Left cardiac atrium (tissue), 4 donors: ENCODE measurements at regions of chr21 and their contacts with region 1.

Region 1: GRCh38 chr21:41612674-41613532 is 104.9 kb upstream of the TMPRSS2 start:
- DNase-seq: peak; percentile 83
- ATAC-seq: peak; percentile 82 to 93

Region 2: DNA sequence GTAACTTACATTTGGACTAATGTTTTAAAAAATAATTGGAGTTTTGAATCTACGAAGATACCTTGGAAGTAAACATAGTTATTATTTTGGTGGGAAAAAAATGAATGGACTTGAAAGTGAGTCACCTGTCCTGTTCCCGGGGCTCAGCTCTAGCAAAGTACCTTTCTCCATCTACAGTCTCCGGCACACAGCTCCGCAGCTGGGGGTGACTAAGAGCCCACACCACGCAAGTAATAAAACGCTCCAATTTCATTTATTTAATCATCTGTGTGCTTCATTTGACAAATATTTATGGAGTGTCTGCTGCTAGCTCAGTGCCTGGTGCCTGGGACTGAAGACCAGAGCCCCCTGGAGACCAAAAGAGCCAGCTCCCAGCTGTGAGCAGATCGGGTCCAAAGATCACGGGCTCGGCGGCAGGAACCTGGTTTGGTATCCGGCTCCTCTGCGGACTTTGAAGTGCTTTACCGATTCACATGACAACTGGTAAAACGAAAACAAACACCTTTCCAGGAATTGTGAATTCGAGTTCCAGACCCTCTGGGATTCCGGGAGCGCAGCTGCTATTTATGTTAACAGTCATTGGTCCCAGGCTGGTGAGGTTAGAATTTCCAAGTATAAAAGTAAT is 155.6 kb after region 1 on chr21:
- intact Hi-C with region 1: loop called in 1 of 2 experiments (anchors 5 kb)
- DNase-seq: no peak
- ATAC-seq: peak; percentile 22 to 40

Region 3: DNA sequence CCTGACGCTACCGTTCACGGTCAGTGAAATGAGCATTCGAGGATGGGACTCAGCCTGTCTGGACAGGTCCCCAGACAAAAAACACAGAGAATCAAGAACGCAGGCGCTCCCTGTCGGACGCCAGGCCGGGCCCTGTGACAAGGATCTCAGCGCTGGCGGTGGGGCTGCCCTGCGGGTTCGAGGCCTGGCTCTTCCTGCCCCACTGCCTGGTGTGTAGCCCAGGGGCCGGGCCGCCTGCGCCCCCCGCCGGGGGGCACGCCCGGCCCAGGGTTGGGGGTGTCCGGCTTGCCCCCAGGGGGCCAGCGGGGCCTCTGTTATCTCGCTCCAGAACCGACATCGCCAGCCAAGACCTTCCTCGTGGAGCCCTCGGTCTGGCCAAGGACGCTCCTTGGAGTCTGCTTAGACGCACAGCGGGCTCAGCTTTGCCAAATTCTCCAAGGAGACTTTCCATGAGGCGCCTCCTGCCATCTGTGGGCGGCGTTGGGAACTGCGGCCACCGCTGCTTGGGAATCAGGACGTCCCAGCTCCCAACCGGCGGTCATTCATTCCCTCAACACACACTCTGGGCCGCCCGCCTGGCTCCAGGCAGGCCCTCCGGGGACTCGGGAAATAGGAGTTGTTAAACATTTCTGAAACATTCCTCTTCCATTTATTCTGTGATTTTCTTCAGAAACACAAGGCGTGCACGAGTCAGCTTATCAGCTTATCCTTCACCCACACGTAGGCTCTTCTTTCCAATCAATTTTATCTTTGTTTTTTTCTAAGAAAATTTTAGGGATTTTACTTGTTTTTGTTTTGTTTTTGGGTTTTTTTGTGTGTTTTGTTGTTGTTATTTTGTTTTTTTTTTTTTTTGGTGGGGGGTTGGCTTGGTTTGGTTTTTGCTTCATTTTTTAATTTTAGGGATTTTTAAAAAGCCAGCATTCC is 165.3 kb after region 1 on chr21:
- intact Hi-C with region 1: loop called in 1 of 2 experiments (anchors 1 kb)
- DNase-seq: peak; percentile 91
- ATAC-seq: peak; percentile 96 to 97

Region 4: DNA sequence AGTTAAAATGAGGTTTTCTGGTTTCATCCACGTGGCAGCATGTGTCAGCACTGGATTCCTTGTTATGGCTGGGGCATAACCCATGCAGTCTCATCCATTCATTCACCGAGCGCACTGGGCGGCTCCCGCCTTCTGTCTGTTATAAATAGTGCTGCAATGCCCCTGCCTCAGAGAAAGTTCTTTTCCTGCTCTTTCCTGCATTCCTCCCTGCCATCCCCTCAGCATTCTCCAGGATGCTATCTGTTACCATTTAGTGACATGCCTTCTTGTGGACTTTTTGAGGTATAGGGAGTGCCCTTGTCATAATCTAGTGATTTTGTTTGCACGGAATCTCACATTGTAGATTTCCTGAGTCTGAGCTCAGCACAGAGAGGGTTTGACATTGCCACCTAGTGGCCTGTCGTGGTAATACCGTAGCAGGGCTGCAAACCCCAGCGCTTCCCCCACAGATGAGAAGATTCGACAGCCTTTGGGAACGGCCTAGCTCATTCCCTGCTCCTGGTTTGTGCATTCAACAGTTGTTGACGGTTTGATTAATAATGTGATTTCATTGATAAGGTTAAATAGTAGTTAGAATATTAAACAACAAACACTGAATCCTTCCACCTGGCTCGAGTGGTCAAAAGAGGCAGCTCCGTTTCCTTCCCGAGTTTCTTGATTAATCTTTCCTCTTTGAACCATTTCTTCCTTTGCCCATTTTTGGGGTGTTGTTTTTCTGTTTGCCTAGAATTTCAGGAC is 504.5 kb after region 1 on chr21:
- intact Hi-C with region 1: loop called in 1 of 2 experiments (anchors 10 kb)
- DNase-seq: peak; percentile 74
- ATAC-seq: peak; percentile 84 to 86